ENCODE measurements at regions of chr5 and their contacts with region 1.

Region 1: GRCh38 chr5:56322592-56322991 is 89.5 kb upstream of the ANKRD55 start:
- DNase-seq: no peak
- H3K4me3 ChIP-seq: no peak overlapping the region
- H3K27ac ChIP-seq: no peak overlapping the region
- H3K4me1 ChIP-seq: peaks cover 6% of the 10 kb centered on the region
- CTCF ChIP-seq: no peak

Region 2: DNA sequence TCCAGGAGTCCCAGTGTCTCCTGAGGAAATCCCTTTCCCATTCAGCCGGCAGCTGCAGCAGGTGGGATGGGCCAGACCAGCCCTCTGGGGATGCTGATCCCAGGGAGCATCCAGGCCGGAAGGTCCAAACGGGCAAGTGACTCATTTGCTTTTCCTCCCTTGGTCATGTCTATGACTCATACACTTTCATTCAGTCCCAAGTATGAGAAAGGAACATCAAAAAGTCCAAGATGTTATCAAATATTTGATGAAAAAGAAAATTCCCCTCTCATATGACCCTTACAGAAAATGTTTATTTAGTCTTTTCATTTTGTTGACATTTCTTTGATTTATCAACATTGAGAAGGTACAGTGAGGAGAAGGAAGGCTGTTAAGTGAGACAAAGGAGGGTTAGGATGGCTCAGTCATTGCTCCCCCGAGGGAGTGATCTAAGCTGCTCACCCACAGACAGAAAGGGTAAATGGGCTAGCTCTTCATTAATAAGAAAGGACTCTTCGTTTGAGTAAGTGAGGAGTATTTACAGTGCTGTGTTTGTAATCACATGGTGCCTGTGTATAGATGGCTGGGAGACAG is 28.1 kb after region 1 on chr5:
- CTCF ChIA-PET with region 1: no interaction called
- POLR2A ChIA-PET with region 1: interaction called, 11 read pairs
- intact Hi-C with region 1: no loop called
- DNase-seq: no peak
- H3K4me3 ChIP-seq: no peak overlapping the region
- H3K27ac ChIP-seq: no peak overlapping the region
- H3K4me1 ChIP-seq: no peaks in the 10 kb centered on the region
- CTCF ChIP-seq: no peak

Measured in OCI-LY7 (cell line).